ENCODE measurements at regions of chr17 and their contacts with region 1.

Region 1: GRCh38 chr17:35612924-35613521 is 25.9 kb downstream of the AP2B1 start:
- DNase-seq: no peak

Region 2: GRCh38 chr17:35660902-35661301 is 47.9 kb after region 1 on chr17:
- intact Hi-C with region 1: loop called (anchors 5 kb)
- DNase-seq: no peak

Region 3: GRCh38 chr17:35731239-35731931 is 118.4 kb after region 1 on chr17 and contains the start of gene RASL10B:
- intact Hi-C with region 1: loop called (anchors 5 kb)
- DNase-seq: peak; percentile 78
- total RNA-seq, gene RASL10B: 22.0 TPM

Region 4: DNA sequence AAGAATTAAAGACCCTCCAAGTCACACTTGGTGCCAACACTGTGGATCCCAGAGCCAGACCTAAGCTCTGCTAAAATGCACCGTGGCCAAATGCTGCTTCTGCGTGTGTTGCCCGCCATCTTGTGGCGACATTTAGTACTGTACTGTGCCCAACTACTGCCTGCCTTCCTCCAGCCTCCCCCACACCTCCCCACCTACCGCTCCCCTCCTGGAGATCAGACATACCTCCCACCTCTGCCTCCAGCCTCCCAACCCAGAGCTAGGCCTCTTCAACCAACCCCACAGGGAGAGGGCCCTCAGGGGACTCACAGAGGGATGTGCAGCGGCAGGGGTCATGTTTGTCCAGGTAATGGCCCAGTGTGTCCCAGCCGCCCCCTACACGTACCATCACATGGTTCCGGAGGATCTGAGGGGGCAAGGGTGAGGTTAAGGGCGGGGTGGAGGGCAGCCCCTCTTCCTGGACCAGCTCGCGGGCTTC is 134.6 kb after region 1 on chr17:
- intact Hi-C with region 1: loop called (anchors 2 kb)
- DNase-seq: no peak

Region 5: DNA sequence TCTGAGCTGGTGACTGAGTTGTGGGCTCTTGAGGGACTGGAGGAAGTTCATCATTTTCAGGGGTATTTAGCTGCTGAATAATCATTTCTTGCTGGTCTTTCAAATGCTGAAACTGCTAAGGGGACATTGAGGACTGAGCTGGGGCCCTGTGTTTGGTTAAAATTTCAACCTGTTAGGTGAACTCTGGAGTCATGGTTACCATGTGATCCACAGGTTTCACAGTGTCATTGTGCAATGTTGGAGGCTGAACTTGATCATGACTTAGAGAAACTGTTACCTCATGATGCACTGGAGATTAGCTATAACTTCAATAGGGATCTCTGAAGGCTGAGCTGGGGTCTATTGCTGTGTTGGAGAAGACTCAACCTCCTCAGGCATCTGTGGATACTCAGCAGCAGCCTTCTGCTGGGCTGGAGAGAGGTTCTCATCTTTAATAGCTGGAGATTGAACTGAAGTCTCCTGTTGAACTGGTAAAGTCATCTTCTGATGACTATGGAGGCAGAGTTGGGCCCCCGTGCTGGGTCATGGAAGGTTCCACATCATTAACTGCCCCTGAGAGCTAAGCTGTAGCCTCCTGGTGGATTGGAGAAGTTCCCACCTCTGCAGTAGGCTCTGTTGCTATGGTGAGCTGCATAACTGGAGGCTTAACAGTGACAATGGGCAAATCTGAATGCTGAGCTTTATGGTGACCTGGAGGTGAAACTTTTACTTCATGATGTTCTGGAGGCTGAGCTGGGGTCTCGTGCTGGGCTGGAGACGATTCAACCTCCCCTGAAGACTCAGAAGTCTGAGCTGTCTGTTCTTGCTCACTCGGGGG is 302.3 kb after region 1 on chr17:
- intact Hi-C with region 1: no loop called
- DNase-seq: no peak

Measured in cardiac septum (tissue), 1 donor.